ENCODE measurements at regions of chr4 and their contacts with region 1.

Region 1: DNA sequence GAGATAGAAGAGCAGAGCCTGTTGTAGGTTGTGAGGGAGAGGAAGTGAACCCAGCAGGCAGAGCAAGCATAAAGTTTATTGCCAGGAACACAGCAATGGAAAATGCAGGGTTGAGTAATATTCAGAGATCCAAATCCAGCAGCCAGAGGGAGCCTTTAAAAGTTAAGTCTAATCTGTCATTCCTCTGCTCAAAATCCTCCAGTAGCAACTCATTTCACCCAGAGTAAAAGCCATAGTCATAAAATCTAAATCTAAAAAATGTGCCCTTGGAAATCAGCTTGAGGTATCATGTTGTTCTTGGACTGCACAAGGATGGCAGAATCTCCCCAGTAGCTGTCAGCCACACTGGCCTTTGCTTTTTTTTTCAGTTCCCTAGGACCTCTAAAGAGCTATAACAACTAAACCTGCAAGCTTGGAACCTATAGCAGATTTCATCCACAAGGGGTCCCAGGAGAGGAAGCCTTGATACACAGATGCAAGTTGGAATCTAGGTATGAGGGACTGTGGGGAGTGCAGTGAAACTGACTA is 62.9 kb upstream of the FRAS1 start:
- DNase-seq: peak; percentile 52 to 53
- H3K4me3 ChIP-seq: no peak overlapping the region
- H3K27ac ChIP-seq: no peak overlapping the region
- H3K4me1 ChIP-seq: no peaks in the 10 kb centered on the region
- H3K27me3 ChIP-seq: no peaks in the 10 kb centered on the region
- CTCF ChIP-seq: peak; percentile 38 to 81 (median 65)
- POLR2A ChIP-seq: no peak

Region 2: DNA sequence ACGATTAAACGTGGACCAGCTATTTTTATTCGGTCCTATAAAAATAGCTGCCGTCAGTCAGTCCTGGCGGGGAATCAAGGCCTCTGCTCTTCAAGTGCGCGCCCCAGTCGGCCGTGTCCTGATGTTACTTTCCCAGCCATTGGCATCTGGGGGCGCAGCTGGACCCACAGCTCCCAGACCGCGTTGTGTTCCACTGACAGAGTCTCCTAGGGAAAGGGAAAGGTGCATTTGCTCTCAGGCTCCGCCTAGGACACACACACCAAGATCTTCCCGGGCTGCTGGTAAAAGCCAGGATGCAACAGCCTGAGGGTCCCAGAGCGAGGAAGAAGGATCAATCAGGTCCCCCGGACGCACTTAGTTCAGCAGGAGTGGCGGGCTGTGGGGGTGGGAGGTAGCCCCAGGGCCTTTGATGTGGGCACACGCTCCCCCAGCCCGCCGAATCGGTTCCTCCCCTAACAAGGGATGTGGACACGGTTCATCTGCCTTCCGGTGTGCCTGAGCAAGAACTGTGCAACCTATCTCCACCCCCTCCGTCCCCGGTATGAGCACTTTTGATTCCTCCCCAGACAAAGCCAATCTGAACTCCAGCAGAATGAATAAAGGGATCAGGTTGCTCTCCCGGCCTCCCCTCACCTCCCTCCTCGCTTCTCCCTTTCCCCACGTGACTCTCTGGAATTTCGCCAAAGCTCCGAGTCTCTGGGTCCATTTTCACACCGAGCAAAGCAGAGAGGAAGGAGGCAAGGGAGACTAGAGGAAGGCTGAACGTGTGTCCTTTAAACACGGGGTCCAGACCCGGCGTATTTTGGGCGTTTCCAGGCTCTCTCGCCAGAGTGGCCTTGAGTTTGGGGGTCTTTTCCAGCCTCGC is 62.2 kb after region 1 on chr4:
- intact Hi-C with region 1: loop called (anchors 10 kb)
- DNase-seq: peak; percentile 95 to 96
- H3K4me3 ChIP-seq: peak overlapping the region; percentile 43 to 65 (median 58)
- H3K27ac ChIP-seq: peak overlapping the region; percentile 86 to 96 (median 89)
- H3K4me1 ChIP-seq: peaks cover 6% of the 10 kb centered on the region in 2 donors
- H3K27me3 ChIP-seq: no peaks in the 10 kb centered on the region
- CTCF ChIP-seq: peak in 4 of 6 experiments; percentile 21 to 46 (median 26)
- POLR2A ChIP-seq: peak; percentile 44 to 77

Region 3: DNA sequence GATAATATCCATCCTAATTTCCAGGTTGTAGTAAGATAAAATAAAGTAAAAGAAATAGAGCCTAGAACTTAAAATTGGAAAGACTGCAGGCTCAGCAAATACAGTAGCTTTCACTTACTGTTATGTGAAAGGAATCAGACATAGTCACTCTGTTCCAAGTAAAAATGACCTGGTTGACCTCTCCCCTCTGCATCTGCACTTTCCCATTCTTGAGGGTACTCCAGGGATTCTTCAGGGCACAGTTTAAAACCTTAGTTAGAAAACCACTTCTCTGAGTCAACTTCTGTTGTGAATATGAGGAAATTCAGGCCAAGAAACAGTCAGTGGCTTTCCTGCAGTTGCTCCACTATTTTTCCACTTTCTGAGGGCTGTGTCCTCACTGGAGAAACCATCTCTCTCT is 105.8 kb after region 1 on chr4:
- intact Hi-C with region 1: no loop called
- DNase-seq: peak in 1 of 2 donors; percentile 15
- H3K4me3 ChIP-seq: no peak overlapping the region
- H3K27ac ChIP-seq: peak overlapping the region; percentile 31 to 70 (median 53)
- H3K4me1 ChIP-seq: peaks cover 25 to 26% of the 10 kb centered on the region in 2 donors
- H3K27me3 ChIP-seq: no peaks in the 10 kb centered on the region
- CTCF ChIP-seq: no peak
- POLR2A ChIP-seq: no peak

Measured in thyroid gland (tissue), 4 donors.